ENCODE measurements at regions of chr6 and their contacts with region 1.

Region 1: DNA sequence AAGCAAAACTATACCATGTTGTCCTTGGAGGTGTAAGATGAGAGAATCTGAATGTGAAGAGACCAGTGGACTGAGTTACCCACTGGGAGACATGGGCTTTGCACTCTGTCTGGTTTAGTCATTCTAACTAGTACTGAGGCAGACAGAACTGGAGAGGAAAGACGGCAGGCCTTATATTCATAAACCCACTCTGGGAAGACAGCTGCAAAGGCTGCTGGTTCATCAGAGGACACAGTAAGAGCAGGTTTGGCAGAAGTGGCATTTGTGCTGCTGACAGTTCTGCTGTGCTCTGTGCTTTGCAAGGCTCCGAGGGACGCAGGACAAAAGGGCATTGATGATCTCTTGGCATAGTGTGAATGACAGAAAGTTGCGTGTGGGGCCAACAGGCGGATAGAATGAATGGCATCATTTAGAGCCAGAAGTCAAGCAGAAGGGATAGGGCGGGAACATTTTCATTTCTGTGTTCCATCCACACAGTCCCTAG is 142.3 kb upstream of the TENT5A start:
- DNase-seq: peak; percentile 39
- ATAC-seq: peak; percentile 35
- H3K4me3 ChIP-seq: peak overlapping the region; percentile 0; the same call in 1 of the 2 replicates
- H3K27ac ChIP-seq: peak overlapping the region; percentile 75
- H3K4me1 ChIP-seq: peaks cover 21% of the 10 kb centered on the region
- H3K27me3 ChIP-seq: no peaks in the 10 kb centered on the region
- CTCF ChIP-seq: no peak
- POLR2A ChIP-seq: no peak
- RAD21 ChIP-seq: no peak

Region 2: GRCh38 chr6:81766482-81767069 is 128.3 kb before region 1 on chr6:
- CTCF ChIA-PET with region 1: no interaction called
- POLR2A ChIA-PET with region 1: no interaction called
- dilution Hi-C with region 1: no loop called
- in situ Hi-C with region 1: no loop called
- intact Hi-C with region 1: loop called (anchors 10 kb)
- DNase-seq: peak; percentile 93
- ATAC-seq: peak; percentile 60
- H3K4me3 ChIP-seq: no peak overlapping the region
- H3K27ac ChIP-seq: peak overlapping the region; percentile 55; the same call in 1 of the 2 replicates
- H3K4me1 ChIP-seq: peaks cover 14% of the 10 kb centered on the region
- H3K27me3 ChIP-seq: no peaks in the 10 kb centered on the region
- CTCF ChIP-seq: no peak
- POLR2A ChIP-seq: no peak
- RAD21 ChIP-seq: no peak

Region 3: GRCh38 chr6:81997091-81997926 is 102.5 kb after region 1 on chr6:
- CTCF ChIA-PET with region 1: no interaction called
- POLR2A ChIA-PET with region 1: no interaction called
- dilution Hi-C with region 1: no loop called
- in situ Hi-C with region 1: no loop called
- intact Hi-C with region 1: loop called (anchors 2 kb)
- DNase-seq: peak; percentile 88
- ATAC-seq: peak; percentile 73
- H3K4me3 ChIP-seq: no peak overlapping the region
- H3K27ac ChIP-seq: peak overlapping the region; percentile 61
- H3K4me1 ChIP-seq: peaks cover 19% of the 10 kb centered on the region
- H3K27me3 ChIP-seq: no peaks in the 10 kb centered on the region
- CTCF ChIP-seq: no peak
- POLR2A ChIP-seq: 0 out of 2 replicates have a peak, but pooled peaks have one; percentile 20
- RAD21 ChIP-seq: no peak

Region 4: DNA sequence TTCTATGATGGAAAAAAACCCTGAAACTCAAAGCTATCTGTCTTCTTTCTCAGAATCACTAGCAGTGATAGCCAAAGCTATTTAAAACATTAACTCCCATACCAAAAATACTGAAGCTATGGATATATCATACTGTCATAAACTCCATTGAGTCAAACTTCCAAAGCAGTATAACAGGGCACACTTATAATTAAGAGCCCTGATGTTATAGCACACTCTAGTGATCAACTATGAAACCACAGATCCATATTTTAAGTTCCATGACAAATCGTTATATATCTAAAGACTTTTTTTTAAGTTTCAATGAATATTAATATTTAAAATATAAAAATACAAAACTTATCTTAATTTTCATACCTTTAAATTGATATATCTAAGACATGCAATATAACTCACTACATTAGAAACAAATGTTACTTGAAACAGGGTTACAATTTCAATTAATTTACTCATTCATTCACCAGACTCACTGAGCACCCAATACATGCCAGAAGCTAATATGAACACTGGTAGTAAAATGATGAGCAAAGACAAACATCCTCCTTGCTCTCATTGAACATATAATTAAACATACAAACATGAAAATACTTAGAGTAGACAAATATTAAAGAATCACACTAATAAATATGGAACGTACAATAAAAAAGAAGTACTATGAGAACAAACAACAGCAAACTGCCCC is 283.4 kb after region 1 on chr6:
- CTCF ChIA-PET with region 1: no interaction called
- POLR2A ChIA-PET with region 1: no interaction called
- dilution Hi-C with region 1: no loop called
- in situ Hi-C with region 1: no loop called
- intact Hi-C with region 1: loop called (anchors 10 kb)
- DNase-seq: peak; percentile 55
- ATAC-seq: peak; percentile 72
- H3K4me3 ChIP-seq: no peak overlapping the region
- H3K27ac ChIP-seq: no peak overlapping the region
- H3K4me1 ChIP-seq: no peaks in the 10 kb centered on the region
- H3K27me3 ChIP-seq: no peaks in the 10 kb centered on the region
- CTCF ChIP-seq: peak; percentile 64
- POLR2A ChIP-seq: no peak
- RAD21 ChIP-seq: peak; percentile 81

Region 5: DNA sequence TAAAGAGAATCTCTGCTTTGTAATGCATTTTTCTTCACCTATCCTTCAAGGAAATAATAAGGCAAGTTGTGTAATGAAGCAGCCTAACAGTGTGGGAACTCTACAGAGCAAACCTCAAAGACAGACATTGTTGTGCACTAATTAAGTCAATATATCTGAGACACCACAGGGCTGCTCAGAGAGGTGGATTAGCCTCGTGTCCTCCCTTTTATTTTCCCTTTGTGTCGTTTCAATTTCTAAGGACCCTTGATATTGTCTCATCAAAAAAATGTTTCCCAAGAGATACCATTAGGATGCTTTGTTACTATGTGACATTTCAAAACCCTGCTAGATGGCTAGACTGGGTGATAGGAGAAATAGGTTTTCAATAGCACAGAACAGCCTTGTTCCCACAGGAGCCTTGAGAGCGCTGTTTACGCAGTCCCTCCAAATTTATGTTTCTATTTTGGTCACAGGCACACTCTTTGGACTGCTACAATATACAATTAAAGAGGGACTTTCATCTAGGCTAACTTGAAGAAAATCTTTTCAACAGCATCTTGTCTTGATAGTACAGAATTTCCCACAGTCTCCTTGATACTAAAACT is 1147.7 kb after region 1 on chr6:
- CTCF ChIA-PET with region 1: no interaction called
- POLR2A ChIA-PET with region 1: no interaction called
- dilution Hi-C with region 1: no loop called
- in situ Hi-C with region 1: no loop called
- intact Hi-C with region 1: no loop called
- DNase-seq: no peak
- ATAC-seq: no peak
- H3K4me3 ChIP-seq: no peak overlapping the region
- H3K27ac ChIP-seq: no peak overlapping the region
- H3K4me1 ChIP-seq: no peaks in the 10 kb centered on the region
- H3K27me3 ChIP-seq: no peaks in the 10 kb centered on the region
- CTCF ChIP-seq: no peak
- POLR2A ChIP-seq: no peak
- RAD21 ChIP-seq: no peak